Panc1 (cell line): ENCODE measurements at regions of chr20 and their contacts with region 1.

Region 1: DNA sequence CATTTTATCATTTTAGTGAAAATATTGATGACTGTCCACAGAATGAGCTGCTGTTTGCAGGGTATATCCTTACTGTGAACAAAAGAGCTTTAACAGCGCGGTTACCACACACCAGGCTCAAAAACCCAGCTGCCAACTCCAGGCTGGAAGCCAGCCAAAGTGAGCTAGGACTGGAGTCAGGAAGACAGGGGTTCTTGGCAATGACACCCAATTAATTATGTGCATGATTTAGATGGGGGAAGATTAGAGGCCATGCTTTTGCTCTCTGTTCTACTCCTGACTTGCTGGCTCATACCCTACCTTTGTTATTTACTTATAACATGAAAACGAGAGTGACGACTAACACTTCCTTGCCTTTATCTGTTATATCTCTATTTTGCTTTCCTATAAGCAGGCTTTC is 128.9 kb upstream of the SHLD1 start:
- DNase-seq: no peak
- ATAC-seq: no peak
- H3K4me3 ChIP-seq: no peak overlapping the region
- H3K27ac ChIP-seq: no peak overlapping the region
- H3K4me1 ChIP-seq: no peaks in the 10 kb centered on the region
- H3K27me3 ChIP-seq: no peaks in the 10 kb centered on the region
- CTCF ChIP-seq: no peak

Region 2: GRCh38 chr20:5580936-5581708 is 40.2 kb before region 1 on chr20:
- CTCF ChIA-PET with region 1: no interaction called
- POLR2A ChIA-PET with region 1: interaction called, 10 read pairs
- in situ Hi-C with region 1: no loop called
- intact Hi-C with region 1: no loop called
- DNase-seq: no peak
- ATAC-seq: no peak
- H3K4me3 ChIP-seq: no peak overlapping the region
- H3K27ac ChIP-seq: no peak overlapping the region
- H3K4me1 ChIP-seq: 0 out of 2 replicates have a peak, but pooled peaks cover 4% of the 10 kb centered on the region
- H3K27me3 ChIP-seq: no peaks in the 10 kb centered on the region
- CTCF ChIP-seq: no peak